ENCODE measurements at regions of chr10 and their contacts with region 1.

Region 1: GRCh38 chr10:21495752-21496342 is 29.6 kb downstream of the SKIDA1 start:
- DNase-seq: peak; percentile 90
- ATAC-seq: peak; percentile 79
- H3K4me3 Mint-ChIP-seq: peak overlapping the region; percentile 85
- H3K27ac Mint-ChIP-seq: no peak overlapping the region
- H3K4me1 Mint-ChIP-seq: peaks cover 36% of the 10 kb centered on the region
- H3K27me3 Mint-ChIP-seq: peaks cover 51% of the 10 kb centered on the region
- CTCF ChIP-seq: peak; percentile 79

Region 2: DNA sequence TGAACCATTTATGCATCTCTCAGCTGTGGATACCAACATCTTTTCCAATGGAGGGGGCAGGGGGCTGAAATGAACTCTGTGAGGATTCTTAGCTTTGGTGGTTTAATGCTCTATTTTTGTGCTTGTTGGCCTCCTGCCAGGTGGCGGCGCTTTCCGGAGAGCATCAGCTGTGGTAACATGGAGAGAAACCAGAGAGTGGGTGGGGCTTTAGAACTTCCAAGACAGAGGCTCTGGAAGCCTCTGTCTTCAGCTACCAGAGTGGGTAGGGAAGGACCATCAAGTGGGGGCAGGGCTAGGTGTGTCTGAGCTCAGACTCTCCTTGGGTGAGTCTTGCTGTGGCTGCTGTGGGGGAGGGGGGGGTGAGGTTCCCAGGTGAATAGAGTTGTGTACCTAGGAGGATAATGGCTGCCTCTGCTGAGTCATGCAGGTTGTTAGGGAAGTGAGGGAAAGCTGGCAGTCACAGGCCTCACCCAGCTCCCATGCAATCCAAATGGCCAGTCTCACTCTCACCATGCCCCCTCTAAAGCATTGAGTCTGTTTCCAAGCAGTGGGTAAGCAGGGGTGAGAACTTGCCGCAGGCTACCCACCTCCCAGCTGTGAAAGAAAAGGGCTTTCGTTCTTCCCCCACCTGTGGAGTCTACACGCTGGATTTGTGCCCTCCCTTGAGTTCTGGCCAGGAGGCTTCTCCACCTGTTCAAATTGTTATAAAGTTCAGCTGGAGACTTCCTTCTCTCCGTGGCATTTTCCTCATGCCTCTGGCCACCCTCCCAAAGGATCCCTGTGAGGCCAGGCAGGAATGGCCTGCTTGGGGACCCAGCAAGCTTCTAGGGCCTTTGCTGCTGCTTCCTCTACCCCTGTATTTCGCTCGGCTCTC is 1125.7 kb before region 1 on chr10:
- CTCF ChIA-PET with region 1: no interaction called
- POLR2A ChIA-PET with region 1: no interaction called
- intact Hi-C with region 1: no loop called
- DNase-seq: no peak
- ATAC-seq: no peak
- H3K4me3 Mint-ChIP-seq: no peak overlapping the region
- H3K27ac Mint-ChIP-seq: no peak overlapping the region
- H3K4me1 Mint-ChIP-seq: no peaks in the 10 kb centered on the region
- H3K27me3 Mint-ChIP-seq: no peaks in the 10 kb centered on the region
- CTCF ChIP-seq: no peak

Region 3: DNA sequence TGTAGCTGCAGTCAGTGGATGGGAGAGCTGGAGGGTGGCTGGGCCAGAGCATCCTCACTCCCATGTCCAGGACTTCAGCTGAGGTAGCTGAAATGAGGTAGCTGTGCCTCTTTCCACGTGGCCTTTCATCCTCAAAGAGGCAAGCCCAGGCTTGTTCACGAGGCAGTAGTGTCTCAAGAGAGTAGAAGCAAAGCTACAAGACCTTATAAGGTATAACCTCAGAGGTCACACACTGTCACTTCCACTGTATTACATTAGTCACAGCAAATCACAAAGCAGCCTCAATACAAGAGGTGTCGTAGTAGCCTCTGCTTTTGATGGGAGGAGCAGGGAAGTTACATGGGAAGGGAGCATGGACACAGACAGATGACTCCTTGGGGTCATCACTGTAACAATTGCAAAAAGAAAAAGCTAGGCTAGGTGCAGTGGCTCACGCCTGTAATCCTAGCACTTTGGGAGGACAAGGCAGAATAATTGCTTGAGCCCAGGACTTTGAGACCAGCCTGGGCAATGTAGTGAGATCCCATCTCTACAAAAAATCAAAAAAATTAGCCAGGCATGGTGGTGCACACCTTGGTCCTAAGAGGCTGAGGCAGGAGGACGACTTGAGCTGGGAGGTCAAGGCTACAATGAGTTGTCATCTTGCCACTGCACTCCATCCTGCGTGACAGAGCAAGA is 67.9 kb before region 1 on chr10:
- CTCF ChIA-PET with region 1: no interaction called
- POLR2A ChIA-PET with region 1: no interaction called
- intact Hi-C with region 1: no loop called
- DNase-seq: no peak
- ATAC-seq: no peak
- H3K4me3 Mint-ChIP-seq: no peak overlapping the region
- H3K27ac Mint-ChIP-seq: no peak overlapping the region
- H3K4me1 Mint-ChIP-seq: no peaks in the 10 kb centered on the region
- H3K27me3 Mint-ChIP-seq: peaks cover 3% of the 10 kb centered on the region
- CTCF ChIP-seq: no peak

Region 4: GRCh38 chr10:21525367-21526183 is 29.7 kb after region 1 on chr10 and contains the start of gene SKIDA1:
- CTCF ChIA-PET with region 1: interaction called, 12 read pairs
- POLR2A ChIA-PET with region 1: interaction called, 18 read pairs
- intact Hi-C with region 1: loop called (anchors 1 kb)
- DNase-seq: peak; percentile 35
- ATAC-seq: peak; percentile 65
- H3K4me3 Mint-ChIP-seq: peak within 1 kb of the TSS; percentile 89
- H3K27ac Mint-ChIP-seq: peak within 1 kb of the TSS; percentile 88
- H3K4me1 Mint-ChIP-seq: peaks cover 27% of the 10 kb centered on the region
- H3K27me3 Mint-ChIP-seq: peaks cover 37% of the 10 kb centered on the region
- CTCF ChIP-seq: no peak
- total RNA-seq, gene SKIDA1: 0.60 TPM in 1 of 2 replicates, not detected in the other

Region 5: DNA sequence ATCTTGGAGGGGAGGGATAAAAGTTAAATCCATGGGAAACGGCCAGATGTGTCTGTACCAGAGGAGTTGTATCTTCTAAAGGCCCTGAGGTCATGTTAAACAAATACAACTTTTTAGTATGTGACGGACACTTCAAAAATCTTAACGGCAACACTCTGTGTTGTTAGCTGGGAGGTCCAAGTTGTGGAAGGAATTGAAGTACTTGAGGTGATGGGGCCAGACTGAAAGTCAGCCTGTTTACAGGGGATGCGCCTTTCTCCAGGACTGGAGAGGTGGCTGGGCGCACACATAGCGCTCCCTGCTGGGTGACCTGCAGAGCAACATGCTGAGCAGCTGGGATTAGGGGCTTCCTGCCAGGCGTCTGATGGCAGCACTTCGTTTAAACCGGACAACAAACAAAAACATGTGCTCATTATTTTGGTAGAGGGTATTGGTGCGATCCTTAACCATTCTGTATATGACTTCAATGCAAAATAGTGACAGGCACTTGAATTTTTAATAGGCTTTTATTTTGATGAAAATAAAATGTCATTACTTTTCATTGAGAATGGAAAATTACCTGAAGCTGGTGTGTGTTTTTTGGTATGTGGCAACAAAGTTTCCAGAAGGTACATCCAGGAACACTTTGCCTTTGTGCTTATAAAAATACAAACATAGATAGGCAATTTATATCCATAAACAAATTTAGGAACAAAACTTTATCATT is 236.4 kb after region 1 on chr10:
- CTCF ChIA-PET with region 1: interaction called, 21 read pairs
- POLR2A ChIA-PET with region 1: no interaction called
- intact Hi-C with region 1: loop called (anchors 1 kb)
- DNase-seq: no peak
- ATAC-seq: peak; percentile 58
- H3K4me3 Mint-ChIP-seq: no peak overlapping the region
- H3K27ac Mint-ChIP-seq: no peak overlapping the region
- H3K4me1 Mint-ChIP-seq: no peaks in the 10 kb centered on the region
- H3K27me3 Mint-ChIP-seq: no peaks in the 10 kb centered on the region
- CTCF ChIP-seq: no peak

Region 6: GRCh38 chr10:21764466-21765189 is 268.8 kb after region 1 on chr10:
- CTCF ChIA-PET with region 1: no interaction called
- POLR2A ChIA-PET with region 1: no interaction called
- intact Hi-C with region 1: no loop called
- DNase-seq: no peak
- ATAC-seq: no peak
- H3K4me3 Mint-ChIP-seq: no peak overlapping the region
- H3K27ac Mint-ChIP-seq: no peak overlapping the region
- H3K4me1 Mint-ChIP-seq: no peaks in the 10 kb centered on the region
- H3K27me3 Mint-ChIP-seq: no peaks in the 10 kb centered on the region
- CTCF ChIP-seq: no peak

Region 7: DNA sequence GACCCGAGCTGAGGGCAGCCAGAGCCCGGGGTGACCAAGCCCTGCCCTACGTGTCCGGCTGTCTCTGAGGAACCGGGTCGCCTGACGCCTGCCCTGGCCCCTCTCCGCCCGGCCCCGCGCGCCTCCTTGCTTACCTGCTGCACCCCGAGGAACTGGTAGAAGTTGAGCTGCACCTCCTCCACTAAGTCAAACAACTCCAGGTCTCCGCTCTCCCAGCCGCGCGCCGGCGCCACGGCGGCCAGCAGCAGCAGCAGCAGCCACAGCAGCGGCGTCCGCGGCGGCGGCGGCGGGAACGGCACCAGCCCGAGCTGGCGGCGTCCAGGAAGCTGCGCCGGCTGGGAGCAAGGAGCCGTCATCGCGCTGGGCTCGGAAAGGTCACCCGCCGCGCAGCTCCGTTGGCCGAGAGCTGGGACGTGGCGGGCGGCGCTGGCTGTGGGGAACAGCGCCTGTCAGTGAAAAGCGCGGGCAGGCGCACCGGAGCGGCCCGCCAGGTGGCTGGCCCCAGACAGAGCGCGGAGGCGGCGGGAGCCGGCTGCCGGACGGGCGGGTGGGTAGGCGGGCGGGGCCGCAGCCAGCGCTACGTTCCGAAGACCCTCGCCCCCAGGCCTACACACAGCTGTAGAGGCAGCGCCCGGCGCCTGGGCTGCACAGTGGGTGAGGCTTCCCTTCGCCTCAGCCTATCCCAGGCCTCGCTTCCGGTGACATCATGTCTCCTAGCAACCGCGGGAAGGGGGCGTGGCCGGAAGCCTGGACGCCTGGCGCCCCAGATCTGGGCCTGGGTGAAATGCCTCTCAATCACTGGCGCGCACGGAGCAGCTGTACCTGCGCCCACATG is 507.4 kb after region 1 on chr10 and contains the start of gene DNAJC1:
- CTCF ChIA-PET with region 1: no interaction called
- POLR2A ChIA-PET with region 1: no interaction called
- intact Hi-C with region 1: loop called (anchors 1 kb)
- DNase-seq: peak; percentile 98
- ATAC-seq: peak; percentile 92
- H3K4me3 Mint-ChIP-seq: peak within 1 kb of the TSS; percentile 87
- H3K27ac Mint-ChIP-seq: peak within 1 kb of the TSS; percentile 91
- H3K4me1 Mint-ChIP-seq: peaks cover 41% of the 10 kb centered on the region
- H3K27me3 Mint-ChIP-seq: no peaks in the 10 kb centered on the region
- CTCF ChIP-seq: no peak
- total RNA-seq, gene DNAJC1: 9.2 and 10.9 TPM in 2 replicates

Region 8: GRCh38 chr10:22316285-22317120 is 820.7 kb after region 1 on chr10 and contains the start of gene COMMD3:
- CTCF ChIA-PET with region 1: interaction called, 4 read pairs
- POLR2A ChIA-PET with region 1: interaction called, 3 read pairs
- intact Hi-C with region 1: loop called (anchors 2 kb)
- DNase-seq: peak; percentile 86
- ATAC-seq: peak; percentile 65
- H3K4me3 Mint-ChIP-seq: peak within 1 kb of the TSS; percentile 97
- H3K27ac Mint-ChIP-seq: peak within 1 kb of the TSS; percentile 98
- H3K4me1 Mint-ChIP-seq: peaks cover 40% of the 10 kb centered on the region
- H3K27me3 Mint-ChIP-seq: no peaks in the 10 kb centered on the region
- CTCF ChIP-seq: no peak
- total RNA-seq, gene COMMD3: 68.2 and 72.8 TPM in 2 replicates

Region 9: DNA sequence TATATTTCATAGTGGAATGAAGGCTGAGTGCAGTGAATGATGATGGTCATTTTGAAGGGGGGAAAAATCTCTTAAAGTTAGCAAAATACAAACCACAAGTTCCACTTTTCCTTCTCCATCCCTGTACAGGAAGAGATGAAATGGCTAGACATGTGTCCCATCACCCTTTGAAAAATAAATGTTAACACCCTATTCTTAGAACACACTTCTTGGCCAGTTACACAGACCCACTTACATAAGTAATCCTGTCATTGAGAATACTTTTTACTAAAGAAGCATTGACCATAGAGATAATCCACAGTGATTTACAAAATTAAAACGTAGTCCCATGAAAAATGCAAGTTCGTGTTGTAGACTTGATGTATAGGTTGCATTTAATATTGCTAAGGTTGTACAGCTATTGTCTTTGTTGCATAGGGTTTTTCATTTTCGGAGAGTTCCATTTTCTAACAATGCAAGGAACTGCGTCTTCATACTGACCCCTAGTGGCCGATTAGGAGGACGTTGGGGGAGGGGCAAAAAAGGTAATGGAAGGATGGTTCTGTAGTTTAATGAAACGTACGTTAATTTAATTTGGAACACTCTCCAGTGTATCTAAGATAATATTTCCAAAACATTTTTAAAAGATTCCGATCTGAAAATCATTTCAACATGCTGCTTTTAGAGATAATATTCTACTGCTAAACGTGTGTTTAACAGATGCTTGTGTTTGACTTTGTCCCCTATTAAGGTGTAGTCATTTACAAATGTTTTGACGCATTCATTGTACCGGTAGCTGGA is 1492.9 kb after region 1 on chr10:
- CTCF ChIA-PET with region 1: interaction called, 3 read pairs
- POLR2A ChIA-PET with region 1: no interaction called
- intact Hi-C with region 1: loop called (anchors 1 kb)
- DNase-seq: peak; percentile 28
- ATAC-seq: peak; percentile 70
- H3K4me3 Mint-ChIP-seq: no peak overlapping the region
- H3K27ac Mint-ChIP-seq: peak overlapping the region; percentile 10
- H3K4me1 Mint-ChIP-seq: peaks cover 8% of the 10 kb centered on the region
- H3K27me3 Mint-ChIP-seq: peaks cover 11% of the 10 kb centered on the region
- CTCF ChIP-seq: peak; percentile 37

Region 10: GRCh38 chr10:23192737-23193434 is 1697.0 kb after region 1 on chr10:
- CTCF ChIA-PET with region 1: no interaction called
- POLR2A ChIA-PET with region 1: no interaction called
- intact Hi-C with region 1: loop called (anchors 10 kb)
- DNase-seq: no peak
- ATAC-seq: no peak
- H3K4me3 Mint-ChIP-seq: no peak overlapping the region
- H3K27ac Mint-ChIP-seq: no peak overlapping the region
- H3K4me1 Mint-ChIP-seq: peaks cover 4% of the 10 kb centered on the region
- H3K27me3 Mint-ChIP-seq: peaks cover 58% of the 10 kb centered on the region
- CTCF ChIP-seq: no peak